ENCODE measurements at regions of chr5 and their contacts with region 1.

Region 1: DNA sequence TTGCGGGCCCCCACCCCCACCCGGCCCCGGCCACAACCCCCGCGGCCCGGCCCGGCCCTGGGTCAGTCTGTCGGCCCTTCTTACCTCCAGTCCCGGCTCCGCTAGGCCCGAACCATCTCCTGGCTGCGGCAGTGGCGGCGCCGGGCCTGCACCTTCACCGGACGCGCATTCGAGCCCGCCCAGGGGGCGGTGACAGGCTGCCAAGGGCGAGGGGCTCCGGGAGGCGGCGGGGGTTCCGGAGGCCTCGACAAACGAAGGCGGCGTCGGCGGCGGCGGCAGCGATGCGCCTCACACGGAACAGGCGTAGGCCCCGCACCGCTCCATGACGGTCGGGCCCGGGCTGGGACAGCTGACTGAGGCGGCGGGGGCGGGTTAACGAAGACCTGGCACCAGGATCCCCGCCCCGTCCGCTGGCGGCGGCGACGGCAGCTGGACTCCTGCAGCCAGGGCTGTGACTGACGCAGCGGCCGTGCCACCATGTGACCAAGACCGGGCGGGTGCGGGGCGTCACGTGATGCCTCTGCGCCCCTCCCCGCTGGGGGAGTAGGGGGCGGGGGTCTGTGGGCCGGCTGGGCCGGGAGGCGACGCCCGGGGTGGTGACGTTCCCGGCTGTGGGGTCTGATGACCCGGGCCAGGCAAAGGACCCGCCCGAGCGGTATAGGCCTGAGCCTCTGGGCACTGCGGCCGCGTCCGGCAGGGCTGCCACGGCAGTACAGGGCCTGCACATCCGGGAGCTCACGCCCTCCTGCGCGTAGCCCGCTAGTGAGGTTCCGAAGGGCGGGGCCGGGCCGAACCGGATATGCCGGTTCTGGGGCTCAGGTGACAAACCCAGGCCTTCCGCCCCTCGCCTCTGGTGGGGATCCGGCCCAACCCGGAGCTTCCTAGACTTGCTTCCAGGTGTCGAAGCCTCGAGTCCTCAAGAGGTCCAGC is at the start of gene AFF4:
- DNase-seq: peak; percentile 94
- ATAC-seq: peak; percentile 92
- H3K4me3 Mint-ChIP-seq: peak within 1 kb of the TSS; percentile 96
- H3K27ac Mint-ChIP-seq: peak within 1 kb of the TSS; percentile 99
- H3K4me1 Mint-ChIP-seq: peaks cover 32% of the 10 kb centered on the region
- H3K27me3 Mint-ChIP-seq: no peaks in the 10 kb centered on the region
- total RNA-seq, gene AFF4: 20.9 to 29.3 TPM

Region 2: GRCh38 chr5:132500931-132501630 is 462.4 kb before region 1 on chr5:
- CTCF ChIA-PET with region 1: no interaction called
- POLR2A ChIA-PET with region 1: no interaction called
- intact Hi-C with region 1: no loop called
- DNase-seq: peak; percentile 85
- ATAC-seq: peak; percentile 34
- H3K4me3 Mint-ChIP-seq: no peak overlapping the region
- H3K27ac Mint-ChIP-seq: no peak overlapping the region
- H3K4me1 Mint-ChIP-seq: peaks cover 22% of the 10 kb centered on the region
- H3K27me3 Mint-ChIP-seq: no peaks in the 10 kb centered on the region

Region 3: GRCh38 chr5:132556763-132557477 is 406.5 kb before region 1 on chr5 and contains the start of gene RAD50:
- CTCF ChIA-PET with region 1: no interaction called
- POLR2A ChIA-PET with region 1: no interaction called
- intact Hi-C with region 1: loop called in 1 of 2 experiments (anchors 2 kb)
- DNase-seq: peak; percentile 96
- ATAC-seq: peak; percentile 99
- H3K4me3 Mint-ChIP-seq: peak within 1 kb of the TSS; percentile 96
- H3K27ac Mint-ChIP-seq: peak within 1 kb of the TSS; percentile 98
- H3K4me1 Mint-ChIP-seq: peaks cover 21% of the 10 kb centered on the region
- H3K27me3 Mint-ChIP-seq: no peaks in the 10 kb centered on the region
- total RNA-seq, gene RAD50: 46.0 to 51.3 TPM

Region 4: DNA sequence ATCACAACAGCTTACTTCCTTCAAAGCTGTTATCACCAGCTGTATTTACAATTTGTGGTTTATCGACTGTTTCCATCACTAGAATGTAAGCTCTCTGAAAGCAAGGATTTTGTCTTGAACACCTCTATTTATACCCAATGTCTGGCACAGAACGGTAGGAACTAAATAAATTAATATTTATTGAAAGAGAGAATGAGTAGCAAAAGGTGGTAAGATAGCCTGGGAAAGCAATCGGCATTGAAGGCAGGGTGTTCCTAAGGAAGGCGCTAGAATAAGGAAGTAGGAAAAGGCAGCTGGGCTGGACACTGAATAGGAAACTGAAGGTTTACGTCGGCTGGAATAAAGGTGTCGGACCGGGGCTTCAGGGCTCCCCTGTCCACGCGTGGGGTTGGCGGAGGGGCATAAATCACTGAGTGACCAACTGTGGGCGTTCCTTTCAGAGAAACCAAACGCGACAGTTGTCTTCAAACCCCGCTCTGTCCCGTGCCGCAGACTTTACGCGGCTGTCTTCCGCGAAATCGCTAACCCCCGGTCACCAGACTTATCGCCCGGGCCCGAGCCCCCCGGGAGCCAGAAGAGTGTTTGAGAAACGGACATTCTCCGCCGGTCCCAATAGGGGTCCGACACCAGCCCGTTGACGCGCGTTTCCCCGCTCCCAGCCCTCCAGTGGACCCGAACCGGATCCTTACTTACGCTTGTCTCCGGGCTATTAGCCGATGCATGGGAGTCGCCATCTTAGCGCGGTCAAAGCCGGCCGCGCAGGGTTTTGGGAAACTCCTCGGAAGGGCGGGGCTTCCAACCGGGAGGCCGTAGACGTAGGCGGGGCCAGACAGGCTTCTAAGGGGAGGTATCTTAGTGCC is 62.6 kb after region 1 on chr5 and contains the start of gene ZCCHC10:
- CTCF ChIA-PET with region 1: interaction called, 4 read pairs
- POLR2A ChIA-PET with region 1: no interaction called
- intact Hi-C with region 1: loop called (anchors 1 to 2 kb)
- DNase-seq: peak; percentile 96
- ATAC-seq: peak; percentile 100
- H3K4me3 Mint-ChIP-seq: peak within 1 kb of the TSS; percentile 94
- H3K27ac Mint-ChIP-seq: peak within 1 kb of the TSS; percentile 91
- H3K4me1 Mint-ChIP-seq: peaks cover 17% of the 10 kb centered on the region
- H3K27me3 Mint-ChIP-seq: no peaks in the 10 kb centered on the region
- total RNA-seq, gene ZCCHC10: 25.7 to 32.2 TPM

Measured in activated CD4-positive, alpha-beta T cell treated with anti-CD3 and anti-CD28 coated beads for 36 hours (primary cell).